Activated CD8-positive, alpha-beta T cell treated with anti-CD3 and anti-CD28 coated beads, Interleukin-2, amount 10 ng/mL, durations not matched to agents 7 days and 5 days (primary cell): ENCODE measurements at regions of chr9 and their contacts with region 1.

Region 1: DNA sequence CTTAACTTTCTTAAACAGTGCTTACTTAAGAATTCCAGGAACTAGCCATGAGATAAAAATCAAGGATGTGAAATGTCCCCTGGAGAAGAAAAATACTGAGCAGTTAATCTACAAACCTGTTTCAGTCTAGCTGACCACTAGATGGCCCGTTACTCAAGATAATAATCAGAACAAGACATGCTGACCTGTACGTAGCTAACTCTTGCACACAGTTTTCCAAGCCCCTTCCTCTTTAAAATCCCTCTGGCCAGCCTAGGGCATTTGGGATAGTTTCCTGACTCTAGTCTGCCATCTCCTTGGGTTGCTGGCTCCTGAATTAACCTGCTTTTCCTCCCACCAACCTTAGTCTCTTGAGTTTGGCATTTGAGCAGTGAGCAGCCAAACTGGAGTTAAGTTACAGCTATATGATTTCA is 59.2 kb upstream of the TRAF1 start:
- DNase-seq: no peak
- ATAC-seq: no peak
- H3K4me3 Mint-ChIP-seq: no peak overlapping the region
- H3K27ac Mint-ChIP-seq: no peak overlapping the region
- H3K4me1 Mint-ChIP-seq: no peaks in the 10 kb centered on the region
- H3K27me3 Mint-ChIP-seq: peaks cover 17% of the 10 kb centered on the region

Region 2: DNA sequence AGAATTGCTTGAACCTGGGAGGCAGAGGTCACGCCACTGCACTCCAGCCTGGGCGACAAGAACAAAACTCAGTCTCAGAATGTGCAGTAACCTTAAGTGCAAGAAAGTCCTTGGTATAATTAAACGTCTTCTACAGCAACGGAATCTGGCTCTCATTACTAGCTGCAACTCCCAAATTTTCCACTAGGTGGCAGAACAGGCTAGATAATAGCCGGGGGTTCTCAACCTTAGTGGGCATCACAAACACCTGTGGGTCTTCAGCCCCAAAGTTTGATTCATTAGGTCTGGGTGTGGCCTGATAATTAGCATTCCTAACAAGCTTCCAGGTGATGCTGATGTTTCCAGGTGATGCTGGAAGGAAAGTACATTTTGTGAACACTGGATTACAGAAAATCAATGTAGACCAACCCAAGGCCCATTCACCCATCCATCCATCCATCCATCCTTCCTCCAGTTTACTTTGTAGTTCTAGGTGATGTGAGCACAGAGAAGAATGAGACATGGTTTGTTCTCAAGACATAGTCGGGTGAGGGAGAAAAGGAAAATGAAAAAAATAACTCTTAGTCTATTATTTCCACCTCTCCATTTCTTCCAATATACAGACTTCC is 229.9 kb before region 1 on chr9:
- CTCF ChIA-PET with region 1: interaction called, 16 read pairs
- POLR2A ChIA-PET with region 1: no interaction called
- DNase-seq: peak; percentile 77
- ATAC-seq: peak; percentile 76
- H3K4me3 Mint-ChIP-seq: no peak overlapping the region
- H3K27ac Mint-ChIP-seq: no peak overlapping the region
- H3K4me1 Mint-ChIP-seq: peaks cover 15% of the 10 kb centered on the region
- H3K27me3 Mint-ChIP-seq: no peaks in the 10 kb centered on the region

Region 3: DNA sequence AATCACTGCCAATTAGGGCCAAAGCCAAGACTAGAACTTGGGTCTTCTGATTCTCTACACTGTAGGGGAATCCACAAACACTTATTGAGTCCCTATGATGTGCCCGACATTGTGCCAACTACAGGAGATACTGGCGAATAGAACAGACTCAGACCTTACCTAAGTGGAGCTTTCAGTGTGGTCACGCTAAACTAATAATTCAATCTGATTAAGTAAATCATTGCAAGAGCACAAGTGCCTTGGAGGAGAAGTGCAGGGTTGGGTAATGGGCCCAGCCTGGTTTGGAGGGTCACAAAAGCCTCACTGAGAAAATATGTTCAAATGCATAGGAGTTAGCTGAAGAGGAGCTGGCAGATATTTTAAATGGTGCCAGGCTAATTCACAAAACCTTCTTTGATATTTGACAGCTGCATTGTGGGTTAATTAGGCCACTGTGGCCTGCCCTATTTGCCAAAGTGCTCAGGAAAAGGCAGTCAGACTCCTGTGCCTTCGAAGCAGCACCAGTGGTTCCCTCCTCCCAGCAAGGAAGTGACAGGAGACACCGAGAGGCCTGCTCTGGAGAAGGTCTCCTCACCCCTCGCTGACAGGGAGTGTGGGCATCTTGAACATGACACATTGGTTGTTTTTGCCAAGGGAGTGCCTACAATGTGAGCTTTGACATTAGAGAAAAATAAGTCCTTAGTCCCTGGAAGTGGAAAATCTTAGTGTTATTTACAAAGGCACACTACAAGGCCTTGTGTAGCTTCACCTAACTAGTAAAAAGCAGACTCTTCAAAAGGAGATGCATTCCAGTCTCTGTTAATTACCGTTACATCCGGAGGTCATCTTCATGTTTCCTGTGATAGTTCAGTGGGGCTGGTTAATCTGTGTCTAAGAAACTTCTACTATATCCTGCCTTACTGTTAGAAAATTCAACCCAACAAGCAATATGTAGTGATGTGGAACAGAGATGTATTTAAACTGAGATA is 35.1 kb before region 1 on chr9:
- CTCF ChIA-PET with region 1: interaction called, 14 read pairs
- POLR2A ChIA-PET with region 1: no interaction called
- DNase-seq: no peak
- ATAC-seq: no peak
- H3K4me3 Mint-ChIP-seq: no peak overlapping the region
- H3K27ac Mint-ChIP-seq: no peak overlapping the region
- H3K4me1 Mint-ChIP-seq: no peaks in the 10 kb centered on the region
- H3K27me3 Mint-ChIP-seq: no peaks in the 10 kb centered on the region

Region 4: DNA sequence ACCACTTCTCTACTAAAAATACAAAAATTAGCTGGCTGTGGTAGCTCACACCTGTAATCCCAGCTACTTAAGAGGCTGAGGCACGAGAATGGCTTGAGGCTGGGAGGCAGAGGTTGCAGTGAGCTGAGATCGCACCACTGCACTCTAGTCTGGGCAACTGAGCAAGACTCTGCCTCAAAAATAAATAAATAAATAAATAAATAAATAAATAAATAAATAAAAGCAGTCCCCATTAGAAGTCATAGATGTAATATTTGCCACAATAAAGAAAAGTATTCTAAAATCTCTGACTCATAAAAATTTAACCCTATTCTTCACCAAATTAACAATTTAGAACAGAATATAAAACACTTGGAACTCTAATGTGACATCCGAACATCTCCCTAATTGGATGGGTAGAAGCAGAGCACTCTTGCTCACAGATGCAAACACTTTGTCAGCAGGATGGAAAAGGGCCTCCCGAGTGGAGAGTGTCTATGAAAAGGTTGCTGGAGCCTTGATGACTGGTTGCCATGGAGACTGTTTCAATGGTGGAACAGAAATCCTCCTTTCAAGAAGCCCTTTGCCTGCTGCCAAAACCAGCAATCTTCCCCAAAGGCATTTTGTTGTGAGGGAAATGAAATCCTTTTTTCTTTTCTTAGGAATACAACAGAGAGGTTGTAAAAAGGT is 20.3 kb before region 1 on chr9:
- CTCF ChIA-PET with region 1: interaction called, 22 read pairs
- POLR2A ChIA-PET with region 1: no interaction called
- DNase-seq: no peak
- ATAC-seq: no peak
- H3K4me3 Mint-ChIP-seq: no peak overlapping the region
- H3K27ac Mint-ChIP-seq: no peak overlapping the region
- H3K4me1 Mint-ChIP-seq: no peaks in the 10 kb centered on the region
- H3K27me3 Mint-ChIP-seq: peaks cover 16% of the 10 kb centered on the region

Region 5: DNA sequence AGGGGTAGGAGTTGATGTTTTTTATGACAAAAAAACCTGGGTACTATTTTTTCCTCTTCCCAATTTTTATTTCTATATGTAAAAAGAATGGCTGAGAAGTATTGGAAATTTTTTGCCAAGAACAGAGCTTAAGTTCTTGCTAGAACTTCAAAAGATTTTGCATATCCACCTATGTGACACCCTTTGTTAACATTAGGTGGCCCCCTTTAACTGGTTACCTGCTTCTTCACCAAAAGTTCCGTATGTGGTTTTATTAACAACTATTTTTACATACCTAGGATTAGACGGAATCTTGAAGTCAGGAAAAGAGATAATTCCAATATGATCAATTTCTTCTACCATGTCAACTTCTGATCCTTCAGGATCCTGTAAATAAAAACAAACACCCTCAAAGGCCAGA is 48.7 kb after region 1 on chr9:
- CTCF ChIA-PET with region 1: interaction called, 10 read pairs
- POLR2A ChIA-PET with region 1: no interaction called
- DNase-seq: no peak
- ATAC-seq: no peak
- H3K4me3 Mint-ChIP-seq: no peak overlapping the region
- H3K27ac Mint-ChIP-seq: no peak overlapping the region
- H3K4me1 Mint-ChIP-seq: peaks cover 3% of the 10 kb centered on the region
- H3K27me3 Mint-ChIP-seq: peaks cover 2% of the 10 kb centered on the region

Region 6: DNA sequence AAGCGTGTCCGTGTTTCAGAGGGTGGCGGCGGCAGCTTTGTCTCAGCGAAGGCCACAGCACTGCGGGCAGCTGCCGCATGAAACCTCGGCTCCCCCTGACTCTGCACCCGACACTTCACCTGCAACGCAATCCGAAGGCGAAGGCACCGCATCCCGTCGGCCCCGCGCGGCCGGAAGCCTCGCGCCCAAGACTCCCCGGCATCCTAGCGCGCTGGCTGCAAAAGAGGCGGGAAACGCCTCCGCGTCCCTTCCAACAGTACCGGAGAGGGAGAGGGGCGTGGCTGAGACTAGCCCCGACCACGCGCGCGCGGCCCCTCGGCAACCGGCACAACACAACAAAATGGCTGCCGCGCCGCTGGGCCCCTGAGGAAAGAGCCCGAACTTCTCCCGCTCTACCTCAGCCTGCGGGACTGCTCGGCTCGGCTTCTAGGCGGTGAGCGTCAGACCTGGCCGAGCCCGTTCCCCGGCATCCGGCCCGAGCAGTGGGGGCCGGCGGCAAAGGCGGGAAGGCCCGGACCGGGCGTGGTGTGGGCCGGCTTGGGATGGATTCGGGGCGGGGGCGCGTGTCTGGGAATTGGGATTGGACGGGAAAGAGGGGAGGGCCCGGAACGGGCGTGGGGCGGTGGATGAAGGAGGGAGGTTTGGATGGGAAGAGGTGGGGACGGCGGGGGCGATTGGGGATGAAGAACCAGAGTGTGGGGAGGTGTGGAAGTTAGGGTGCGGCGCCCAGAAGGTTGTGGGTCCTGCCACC is 89.0 kb after region 1 on chr9 and contains the start of gene CNTRL:
- CTCF ChIA-PET with region 1: interaction called, 42 read pairs
- POLR2A ChIA-PET with region 1: no interaction called
- DNase-seq: peak; percentile 96
- ATAC-seq: peak; percentile 87
- H3K4me3 Mint-ChIP-seq: peak within 1 kb of the TSS; percentile 99
- H3K27ac Mint-ChIP-seq: peak within 1 kb of the TSS; percentile 98
- H3K4me1 Mint-ChIP-seq: peaks cover 53% of the 10 kb centered on the region
- H3K27me3 Mint-ChIP-seq: no peaks in the 10 kb centered on the region
- total RNA-seq, gene CNTRL: 80.8 to 84.3 TPM

Region 7: DNA sequence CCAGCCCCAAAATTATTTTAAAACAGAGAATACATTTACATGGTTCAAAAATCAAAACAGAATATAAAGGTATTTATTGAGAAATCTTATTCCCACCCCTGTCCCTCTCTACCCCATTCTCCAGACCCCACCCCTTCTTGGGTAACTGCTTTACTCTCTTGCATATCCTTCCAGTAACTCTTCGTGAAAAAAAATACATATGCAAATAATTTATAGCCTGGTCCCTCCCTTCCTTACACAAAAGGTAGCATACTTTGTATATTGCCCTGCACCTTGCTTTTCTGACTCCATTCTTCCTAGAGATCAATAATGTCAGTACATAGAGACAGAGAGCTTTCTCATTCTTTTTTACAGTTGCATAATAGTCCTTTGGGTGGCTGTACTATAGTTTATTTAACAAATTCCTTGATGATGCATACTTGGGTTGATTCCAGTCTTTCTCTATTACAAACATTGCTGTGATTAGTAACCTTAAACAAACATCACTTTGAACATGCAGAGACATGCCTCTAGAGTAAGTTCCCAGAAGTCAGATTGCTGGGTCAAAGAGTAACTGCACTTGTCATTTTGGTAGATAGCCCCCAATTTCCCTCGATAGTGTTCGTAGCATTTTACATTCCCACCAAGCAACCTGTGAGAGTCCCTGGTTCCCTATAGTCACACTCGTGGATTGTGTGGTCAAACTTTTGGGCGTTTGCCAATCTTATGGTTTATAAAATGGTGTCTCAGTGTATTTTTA is 336.4 kb after region 1 on chr9:
- CTCF ChIA-PET with region 1: no interaction called
- POLR2A ChIA-PET with region 1: no interaction called
- DNase-seq: no peak
- ATAC-seq: no peak
- H3K4me3 Mint-ChIP-seq: no peak overlapping the region
- H3K27ac Mint-ChIP-seq: peak overlapping the region; percentile 50
- H3K4me1 Mint-ChIP-seq: peaks cover 34% of the 10 kb centered on the region
- H3K27me3 Mint-ChIP-seq: no peaks in the 10 kb centered on the region